Thyroid gland (tissue), 4 donors: ENCODE measurements at regions of chr4 and their contacts with region 1.

Region 1: DNA sequence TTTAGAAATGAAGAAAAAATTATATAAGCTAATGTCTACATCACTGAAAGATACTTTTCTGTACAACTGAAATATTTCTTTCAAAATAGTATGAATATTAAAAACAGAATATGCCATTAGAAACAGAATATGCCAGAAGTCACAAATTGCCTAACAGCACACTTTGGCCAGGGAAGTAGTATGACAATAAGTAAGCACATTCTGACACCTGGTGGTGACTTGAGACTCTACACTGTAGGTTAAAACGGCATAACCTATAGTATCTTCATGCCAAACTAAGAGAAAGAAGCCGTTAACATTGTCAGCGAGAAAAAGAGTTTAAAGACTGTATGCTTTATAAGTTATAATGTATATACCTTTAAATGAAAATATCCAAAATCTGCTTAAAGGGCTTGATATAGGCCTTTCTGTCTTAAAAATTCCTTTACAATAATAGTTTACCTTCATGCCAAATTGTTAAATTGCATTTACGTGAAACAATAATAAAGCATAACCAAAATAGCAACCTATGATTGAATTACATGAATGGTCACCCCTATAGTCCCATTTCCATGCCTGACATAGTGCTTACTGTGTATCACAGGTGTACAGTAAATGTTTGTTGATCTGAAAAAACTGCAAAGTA is 32.8 kb downstream of the FAM13A start:
- DNase-seq: peak; percentile 49 to 50
- H3K4me3 ChIP-seq: no peak overlapping the region
- H3K27ac ChIP-seq: no peak overlapping the region
- H3K4me1 ChIP-seq: no peaks in the 10 kb centered on the region
- H3K27me3 ChIP-seq: no peaks in the 10 kb centered on the region
- CTCF ChIP-seq: peak; percentile 63 to 95 (median 82)
- POLR2A ChIP-seq: no peak

Region 2: GRCh38 chr4:88533937-88534750 is 490.0 kb before region 1 on chr4:
- intact Hi-C with region 1: loop called (anchors 10 kb)
- DNase-seq: no peak
- H3K4me3 ChIP-seq: no peak overlapping the region
- H3K27ac ChIP-seq: no peak overlapping the region
- H3K4me1 ChIP-seq: peaks cover 0 to 2% of the 10 kb centered on the region in 2 donors
- H3K27me3 ChIP-seq: no peaks in the 10 kb centered on the region
- CTCF ChIP-seq: no peak
- POLR2A ChIP-seq: no peak

Region 3: DNA sequence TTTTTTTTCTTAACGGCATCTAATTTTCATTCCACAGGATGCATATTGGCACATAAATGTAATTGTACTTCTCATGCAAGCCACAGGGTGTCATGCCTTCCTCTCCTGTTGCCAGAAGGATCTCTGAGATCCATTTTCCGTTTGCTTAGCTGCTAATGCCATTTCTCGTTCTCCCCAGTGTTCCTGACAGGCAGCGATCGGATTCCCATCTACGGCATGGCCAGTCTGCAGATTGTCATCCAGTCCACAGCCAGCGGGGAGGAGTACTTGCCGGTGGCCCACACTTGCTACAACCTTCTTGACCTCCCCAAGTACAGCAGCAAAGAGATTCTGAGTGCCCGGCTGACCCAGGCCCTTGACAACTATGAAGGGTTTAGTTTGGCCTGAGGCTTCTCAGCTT is 317.6 kb before region 1 on chr4:
- intact Hi-C with region 1: loop called (anchors 5 kb)
- DNase-seq: peak; percentile 49 to 52
- H3K4me3 ChIP-seq: no peak overlapping the region
- H3K27ac ChIP-seq: peak overlapping the region; percentile 1 to 74 (median 37)
- H3K4me1 ChIP-seq: peaks cover 8 to 10% of the 10 kb centered on the region in 2 donors
- H3K27me3 ChIP-seq: no peaks in the 10 kb centered on the region
- CTCF ChIP-seq: peak; percentile 41 to 94 (median 68)
- POLR2A ChIP-seq: no peak

Region 4: GRCh38 chr4:88743696-88744095 is 280.5 kb before region 1 on chr4:
- intact Hi-C with region 1: no loop called
- DNase-seq: no peak
- H3K4me3 ChIP-seq: no peak overlapping the region
- H3K27ac ChIP-seq: peak overlapping the region; percentile 90 to 97 (median 92)
- H3K4me1 ChIP-seq: peaks cover 33 to 52% of the 10 kb centered on the region in 2 donors
- H3K27me3 ChIP-seq: no peaks in the 10 kb centered on the region
- CTCF ChIP-seq: no peak
- POLR2A ChIP-seq: no peak

Region 5: GRCh38 chr4:88823058-88823919 is 200.9 kb before region 1 on chr4:
- intact Hi-C with region 1: loop called (anchors 5 kb)
- DNase-seq: peak; percentile 94 to 97
- H3K4me3 ChIP-seq: peak overlapping the region in 2 of 3 donors; percentile 23 to 38
- H3K27ac ChIP-seq: peak overlapping the region; percentile 93 to 96 (median 95)
- H3K4me1 ChIP-seq: peaks cover 16 to 22% of the 10 kb centered on the region in 2 donors
- H3K27me3 ChIP-seq: no peaks in the 10 kb centered on the region
- CTCF ChIP-seq: no peak
- POLR2A ChIP-seq: peak; percentile 65 to 95

Region 6: GRCh38 chr4:89134775-89135319 is 110.7 kb after region 1 on chr4:
- intact Hi-C with region 1: no loop called
- DNase-seq: no peak
- H3K4me3 ChIP-seq: no peak overlapping the region
- H3K27ac ChIP-seq: no peak overlapping the region
- H3K4me1 ChIP-seq: no peaks in the 10 kb centered on the region
- H3K27me3 ChIP-seq: no peaks in the 10 kb centered on the region
- CTCF ChIP-seq: no peak
- POLR2A ChIP-seq: no peak